CD8-positive, alpha-beta T cell (primary cell): ENCODE measurements at regions of chr4 and their contacts with region 1.

Region 1: DNA sequence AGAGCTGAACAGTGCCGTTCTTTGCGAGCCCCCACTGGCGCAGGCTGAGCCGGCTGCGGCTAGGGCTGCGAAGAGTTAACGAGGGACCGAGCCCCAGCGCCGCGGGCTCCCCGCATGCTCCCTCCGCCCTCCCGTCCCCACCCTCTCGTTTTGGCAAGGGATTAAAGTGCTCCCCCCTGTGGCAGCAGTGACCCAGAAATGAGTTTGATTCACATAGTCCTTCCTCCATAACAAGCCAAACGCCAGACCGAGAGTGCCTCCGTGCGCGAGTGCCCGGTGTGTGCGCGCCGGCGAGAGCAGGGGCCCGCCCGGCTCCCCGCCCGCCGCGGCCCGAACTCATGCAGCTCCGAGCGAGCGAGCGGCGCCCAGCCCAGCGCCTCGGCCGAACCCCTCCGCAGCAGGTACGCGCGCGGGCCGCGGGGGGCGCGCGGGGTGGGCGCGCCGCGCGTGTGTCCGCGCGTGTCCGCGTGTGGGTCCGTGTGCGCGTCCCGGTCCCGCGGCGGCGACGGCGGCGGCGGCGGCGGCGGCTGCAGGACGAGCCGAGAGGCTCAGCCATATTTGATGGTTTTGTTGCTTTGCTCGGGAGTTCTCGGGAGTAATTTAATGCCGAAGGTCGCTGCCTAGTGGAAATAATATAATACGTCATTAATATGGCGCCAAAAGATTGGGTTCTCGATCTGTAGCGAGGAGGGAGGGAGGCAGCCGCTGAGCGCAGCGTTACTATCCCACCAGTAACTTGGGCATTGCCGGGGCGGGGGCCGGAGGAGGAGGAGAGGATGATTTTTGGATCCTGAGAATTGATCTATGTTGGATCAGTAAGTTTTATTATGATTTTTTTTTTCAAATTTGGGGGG is at the start of gene JADE1:
- DNase-seq: peak; percentile 82 to 95 (median 90)
- ATAC-seq: peak; percentile 58
- H3K4me3 ChIP-seq: peak within 1 kb of the TSS; percentile 80 to 93
- H3K4me3 Mint-ChIP-seq: peak within 1 kb of the TSS; percentile 97
- H3K27ac ChIP-seq: peak within 1 kb of the TSS; percentile 85 to 95
- H3K27ac Mint-ChIP-seq: peak within 1 kb of the TSS; percentile 99
- H3K4me1 ChIP-seq: peaks cover 12% of the 10 kb centered on the region
- H3K4me1 Mint-ChIP-seq: peaks cover 22% of the 10 kb centered on the region
- H3K27me3 ChIP-seq: no peaks in the 10 kb centered on the region
- H3K27me3 Mint-ChIP-seq: no peaks in the 10 kb centered on the region
- CTCF ChIP-seq: peak; percentile 43
- total RNA-seq, gene JADE1: 77.5 to 82.2 TPM

Region 2: DNA sequence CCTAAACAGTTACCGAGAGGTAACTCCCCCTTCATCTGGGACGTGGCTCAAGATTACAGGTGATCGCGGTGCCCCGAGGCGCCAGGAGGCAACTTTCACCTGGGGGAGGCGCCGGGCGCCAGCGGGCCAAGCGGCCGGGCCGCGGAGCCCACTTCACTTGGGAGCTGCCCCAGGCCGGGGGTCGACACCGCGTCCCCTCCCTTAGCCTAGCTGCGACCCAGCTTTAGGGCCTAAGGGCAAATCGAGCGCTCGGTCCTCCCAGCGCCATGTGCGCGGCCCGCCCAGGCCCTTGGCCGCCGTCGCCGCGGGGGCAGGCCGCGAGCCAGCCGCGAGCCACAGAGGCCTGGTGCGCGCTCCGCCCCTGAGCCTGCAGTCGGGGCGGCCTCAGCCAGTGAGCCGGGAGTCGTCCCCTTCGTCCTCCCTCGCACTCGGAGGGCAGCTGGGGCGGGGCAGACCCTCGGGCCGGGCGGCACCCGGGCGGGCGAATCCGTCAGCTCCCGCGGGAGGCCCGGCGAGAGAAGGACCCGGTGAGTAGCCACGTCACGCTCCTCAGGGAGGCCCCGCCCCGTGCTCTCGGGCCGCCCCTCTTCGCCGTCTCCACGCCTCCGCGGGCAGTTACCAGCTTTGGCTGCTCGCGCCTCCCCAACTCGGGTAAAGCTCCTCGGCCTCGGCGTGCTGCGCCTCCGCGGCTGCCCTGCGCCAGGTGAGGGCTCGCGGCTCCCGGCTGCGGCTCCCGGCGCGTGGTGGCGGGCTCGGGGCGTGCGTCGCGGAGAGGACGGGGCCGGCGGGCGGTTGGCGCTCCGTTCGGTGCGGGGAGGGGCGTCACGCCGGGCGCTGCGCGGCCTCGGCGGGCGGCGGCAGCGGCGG is 748.8 kb before region 1 on chr4 and contains the start of gene LARP1B:
- CTCF ChIA-PET with region 1: no interaction called
- POLR2A ChIA-PET with region 1: interaction called, 4 read pairs
- intact Hi-C with region 1: loop called (anchors 1 to 5 kb)
- DNase-seq: peak; percentile 87 to 95 (median 91)
- ATAC-seq: peak; percentile 90
- H3K4me3 ChIP-seq: peak within 1 kb of the TSS; percentile 55 to 73
- H3K4me3 Mint-ChIP-seq: peak within 1 kb of the TSS; percentile 84
- H3K27ac ChIP-seq: peak within 1 kb of the TSS; percentile 79 to 86
- H3K27ac Mint-ChIP-seq: peak within 1 kb of the TSS; percentile 92
- H3K4me1 ChIP-seq: peaks cover 5% of the 10 kb centered on the region
- H3K4me1 Mint-ChIP-seq: peaks cover 12% of the 10 kb centered on the region
- H3K27me3 ChIP-seq: no peaks in the 10 kb centered on the region
- H3K27me3 Mint-ChIP-seq: no peaks in the 10 kb centered on the region
- CTCF ChIP-seq: no peak
- total RNA-seq, gene LARP1B: 10.0 to 10.1 TPM

Region 3: GRCh38 chr4:128454281-128455075 is 355.2 kb before region 1 on chr4:
- CTCF ChIA-PET with region 1: no interaction called
- POLR2A ChIA-PET with region 1: no interaction called
- intact Hi-C with region 1: loop called in 1 of 2 experiments (anchors 1 kb)
- DNase-seq: peak; percentile 21 to 80 (median 65)
- ATAC-seq: peak; percentile 100
- H3K4me3 ChIP-seq: no peak overlapping the region
- H3K4me3 Mint-ChIP-seq: no peak overlapping the region
- H3K27ac ChIP-seq: no peak overlapping the region
- H3K27ac Mint-ChIP-seq: no peak overlapping the region
- H3K4me1 ChIP-seq: no peaks in the 10 kb centered on the region
- H3K4me1 Mint-ChIP-seq: peaks cover 7% of the 10 kb centered on the region
- H3K27me3 ChIP-seq: no peaks in the 10 kb centered on the region
- H3K27me3 Mint-ChIP-seq: peaks cover 7% of the 10 kb centered on the region
- CTCF ChIP-seq: peak; percentile 65

Region 4: GRCh38 chr4:128823025-128823661 is 13.4 kb after region 1 on chr4:
- CTCF ChIA-PET with region 1: no interaction called
- POLR2A ChIA-PET with region 1: interaction called, 17 read pairs
- intact Hi-C with region 1: no loop called
- DNase-seq: no peak
- ATAC-seq: no peak
- H3K4me3 ChIP-seq: no peak overlapping the region
- H3K4me3 Mint-ChIP-seq: no peak overlapping the region
- H3K27ac ChIP-seq: no peak overlapping the region
- H3K27ac Mint-ChIP-seq: no peak overlapping the region
- H3K4me1 ChIP-seq: peaks cover 37% of the 10 kb centered on the region
- H3K4me1 Mint-ChIP-seq: peaks cover 84% of the 10 kb centered on the region
- H3K27me3 ChIP-seq: no peaks in the 10 kb centered on the region
- H3K27me3 Mint-ChIP-seq: no peaks in the 10 kb centered on the region
- CTCF ChIP-seq: no peak

Region 5: GRCh38 chr4:128863312-128864075 is 53.8 kb after region 1 on chr4:
- CTCF ChIA-PET with region 1: interaction called, 7 read pairs
- POLR2A ChIA-PET with region 1: interaction called, 5 read pairs
- intact Hi-C with region 1: loop called (anchors 1 to 2 kb)
- DNase-seq: peak; percentile 24 to 80 (median 67)
- ATAC-seq: peak; percentile 26
- H3K4me3 ChIP-seq: no peak overlapping the region
- H3K4me3 Mint-ChIP-seq: no peak overlapping the region
- H3K27ac ChIP-seq: peak overlapping the region in 1 of 2 experiments; percentile 52
- H3K27ac Mint-ChIP-seq: peak overlapping the region; percentile 75
- H3K4me1 ChIP-seq: peaks cover 24% of the 10 kb centered on the region
- H3K4me1 Mint-ChIP-seq: peaks cover 35% of the 10 kb centered on the region
- H3K27me3 ChIP-seq: no peaks in the 10 kb centered on the region
- H3K27me3 Mint-ChIP-seq: no peaks in the 10 kb centered on the region
- CTCF ChIP-seq: peak; percentile 78